AG04450 (cell line): ENCODE measurements at regions of chr5 and their contacts with region 1.

Region 1: DNA sequence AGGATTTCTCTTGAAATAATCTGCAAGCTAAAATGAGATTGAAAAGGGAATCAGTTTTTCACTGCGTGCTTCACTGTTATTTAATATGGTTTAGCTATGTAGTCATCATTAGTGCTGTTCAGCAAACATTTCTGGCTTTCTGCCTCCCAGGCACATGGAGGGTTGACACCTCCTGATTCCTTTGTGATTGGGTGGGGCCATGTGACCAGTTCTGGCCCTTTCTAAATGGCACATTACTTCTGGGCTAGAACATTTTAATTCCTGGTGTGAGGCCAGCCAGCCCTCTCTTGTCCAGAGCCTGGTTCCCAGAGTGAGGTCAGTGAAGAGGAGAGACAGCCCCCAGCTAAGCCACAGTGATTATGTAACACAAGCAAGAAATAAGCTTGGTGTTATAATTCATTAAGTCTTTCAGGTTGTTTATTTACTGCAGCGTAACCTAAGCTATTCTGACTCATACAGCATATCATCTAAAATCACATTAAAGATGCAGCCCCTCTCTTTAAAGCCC is 17.4 kb upstream of the ARSI start:
- DNase-seq: no peak
- H3K4me3 ChIP-seq: no peak overlapping the region
- H3K27ac ChIP-seq: peak overlapping the region; percentile 66
- H3K27me3 ChIP-seq: no peaks in the 10 kb centered on the region
- CTCF ChIP-seq: no peak

Region 2: DNA sequence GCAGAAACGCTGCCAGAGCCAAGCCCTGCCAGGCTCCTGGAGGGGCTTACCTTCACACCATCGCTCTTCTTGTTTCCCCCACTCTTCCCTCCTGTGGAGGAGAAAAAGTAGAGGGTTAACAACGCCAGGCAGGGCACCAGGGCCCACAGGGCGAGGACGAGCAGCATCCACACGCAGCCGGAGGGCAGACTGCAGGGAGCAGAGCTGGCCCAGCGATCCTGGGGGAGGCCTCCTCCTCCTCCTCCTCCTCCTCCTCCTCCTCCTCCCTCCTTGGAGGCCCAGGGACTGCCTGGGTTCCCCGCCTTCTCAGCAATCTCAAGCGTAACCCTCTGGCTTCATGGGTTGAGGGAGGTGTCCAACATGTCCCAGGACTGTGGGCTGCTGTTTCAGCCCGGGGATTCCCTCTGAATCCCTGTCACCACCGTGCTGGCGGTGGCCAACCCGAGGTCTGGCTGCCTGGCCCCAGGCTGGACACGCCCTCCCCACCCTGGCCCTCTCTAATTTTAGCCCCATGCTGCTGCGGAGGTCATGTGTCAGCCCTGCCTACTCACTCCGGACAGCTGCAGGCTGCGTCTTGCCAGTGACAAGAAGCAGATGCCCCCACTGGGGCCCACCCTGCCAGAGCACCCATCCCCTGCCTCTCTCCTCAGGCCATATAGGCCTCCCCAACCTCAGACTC is 74.9 kb before region 1 on chr5:
- CTCF ChIA-PET with region 1: no interaction called
- POLR2A ChIA-PET with region 1: no interaction called
- DNase-seq: no peak
- H3K4me3 ChIP-seq: no peak overlapping the region
- H3K27ac ChIP-seq: peak overlapping the region; percentile 21
- H3K27me3 ChIP-seq: peaks cover 2% of the 10 kb centered on the region
- CTCF ChIP-seq: no peak

Region 3: DNA sequence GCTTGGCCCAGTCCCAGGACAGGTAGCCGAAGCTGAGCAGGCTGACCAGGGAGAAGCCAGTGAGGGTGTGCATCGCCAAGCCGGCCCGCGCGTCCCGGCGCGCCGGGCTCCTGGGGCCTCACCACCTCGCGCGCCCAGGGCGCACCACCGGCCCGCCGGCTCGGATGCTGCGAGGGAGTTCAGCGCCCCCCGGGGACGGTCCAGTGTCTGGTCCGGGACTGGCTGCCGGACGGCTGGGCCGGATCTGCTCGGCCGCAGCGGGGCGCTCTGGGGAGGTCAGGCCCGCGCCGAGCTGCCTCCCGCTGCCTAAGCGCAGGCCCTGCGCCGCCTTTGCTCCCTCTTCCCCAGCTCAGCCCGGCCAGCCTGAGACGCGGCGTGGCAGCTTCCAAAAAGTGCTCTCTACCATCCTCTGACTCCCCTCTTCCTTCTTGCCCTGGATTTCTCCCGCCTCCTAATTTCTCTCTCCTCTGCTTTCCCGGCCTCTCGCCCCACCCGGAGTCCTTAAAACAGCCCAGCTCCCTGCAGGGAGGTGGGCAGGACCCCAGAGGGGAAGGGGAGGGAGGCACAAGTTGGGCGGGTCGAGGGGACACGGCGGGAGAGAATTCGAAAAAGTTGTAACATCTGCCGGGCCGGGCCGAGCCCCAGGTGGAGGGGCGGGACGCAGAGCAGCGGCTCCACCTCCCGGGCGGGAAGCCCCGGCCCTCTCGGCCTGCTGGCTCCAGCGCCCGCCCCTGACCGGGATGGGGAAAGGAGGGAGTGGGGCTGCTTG is 17.6 kb before region 1 on chr5 and contains the start of gene ARSI:
- CTCF ChIA-PET with region 1: interaction called, 8 read pairs
- POLR2A ChIA-PET with region 1: interaction called, 22 read pairs
- DNase-seq: peak; percentile 55
- H3K4me3 ChIP-seq: peak within 1 kb of the TSS; percentile 60
- H3K27ac ChIP-seq: peak within 1 kb of the TSS; percentile 82
- H3K27me3 ChIP-seq: no peaks in the 10 kb centered on the region
- CTCF ChIP-seq: peak; percentile 21; the same call in 1 of the 2 replicates
- polyA plus RNA-seq, gene ARSI: 11.3 and 15.8 TPM in 2 replicates